Mammary epithelial cell (primary cell): ENCODE measurements at regions of chr1 and their contacts with region 1.

Region 1: DNA sequence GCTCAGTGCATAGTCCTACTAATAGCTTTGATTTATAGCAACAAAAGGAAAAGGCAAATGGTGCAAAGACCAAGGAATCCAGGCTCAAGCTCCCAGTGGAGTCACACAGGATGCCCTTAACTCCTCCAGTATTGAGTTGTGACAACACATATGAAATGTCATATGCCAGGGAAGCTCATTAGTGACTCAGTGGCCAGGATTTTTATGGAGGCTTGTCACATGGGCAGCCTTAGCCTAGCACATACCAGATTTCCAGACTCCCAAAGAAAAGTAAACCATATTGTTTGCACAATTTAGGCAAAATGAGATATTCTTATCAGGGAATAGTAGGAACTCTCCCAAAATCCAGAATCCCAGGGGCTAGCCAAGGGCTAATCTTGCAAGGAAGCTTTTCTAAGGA is 129.2 kb downstream of the MAGI3 start:
- DNase-seq: peak; percentile 30
- H3K4me3 ChIP-seq: no peak overlapping the region
- H3K27ac ChIP-seq: no peak overlapping the region
- H3K4me1 ChIP-seq: peaks cover 8% of the 10 kb centered on the region
- H3K27me3 ChIP-seq: no peaks in the 10 kb centered on the region
- CTCF ChIP-seq: no peak

Region 2: DNA sequence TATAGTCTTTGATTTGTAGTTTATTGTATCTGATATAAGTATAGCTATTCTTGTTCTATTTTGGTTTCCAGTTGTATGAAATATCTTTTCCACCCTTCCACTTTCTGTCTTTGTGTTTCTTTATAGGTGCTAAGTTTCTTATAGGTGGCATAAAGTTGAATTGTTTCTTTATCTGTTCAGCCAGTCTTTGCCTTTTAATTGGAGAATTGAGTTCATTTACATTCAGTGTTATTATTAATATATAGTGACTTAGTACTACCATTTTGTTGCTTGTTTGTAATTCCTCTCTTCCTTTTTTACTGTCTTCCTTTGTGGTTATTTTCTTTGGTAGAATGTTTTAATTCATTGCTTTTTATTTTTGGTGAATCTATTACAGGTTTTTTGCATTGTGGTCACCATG is 51.6 kb before region 1 on chr1:
- CTCF ChIA-PET with region 1: no interaction called
- dilution Hi-C with region 1: no loop called
- in situ Hi-C with region 1: no loop called
- intact Hi-C with region 1: no loop called
- DNase-seq: no peak
- H3K4me3 ChIP-seq: no peak overlapping the region
- H3K27ac ChIP-seq: no peak overlapping the region
- H3K4me1 ChIP-seq: no peaks in the 10 kb centered on the region
- H3K27me3 ChIP-seq: no peaks in the 10 kb centered on the region
- CTCF ChIP-seq: no peak

Region 3: GRCh38 chr1:113542221-113542701 is 22.7 kb after region 1 on chr1:
- CTCF ChIA-PET with region 1: interaction called, 22 read pairs
- dilution Hi-C with region 1: no loop called
- in situ Hi-C with region 1: no loop called
- intact Hi-C with region 1: no loop called
- DNase-seq: peak; percentile 88
- H3K4me3 ChIP-seq: no peak overlapping the region
- H3K27ac ChIP-seq: peak overlapping the region; percentile 77
- H3K4me1 ChIP-seq: peaks cover 23% of the 10 kb centered on the region
- H3K27me3 ChIP-seq: no peaks in the 10 kb centered on the region
- CTCF ChIP-seq: no peak

Region 4: DNA sequence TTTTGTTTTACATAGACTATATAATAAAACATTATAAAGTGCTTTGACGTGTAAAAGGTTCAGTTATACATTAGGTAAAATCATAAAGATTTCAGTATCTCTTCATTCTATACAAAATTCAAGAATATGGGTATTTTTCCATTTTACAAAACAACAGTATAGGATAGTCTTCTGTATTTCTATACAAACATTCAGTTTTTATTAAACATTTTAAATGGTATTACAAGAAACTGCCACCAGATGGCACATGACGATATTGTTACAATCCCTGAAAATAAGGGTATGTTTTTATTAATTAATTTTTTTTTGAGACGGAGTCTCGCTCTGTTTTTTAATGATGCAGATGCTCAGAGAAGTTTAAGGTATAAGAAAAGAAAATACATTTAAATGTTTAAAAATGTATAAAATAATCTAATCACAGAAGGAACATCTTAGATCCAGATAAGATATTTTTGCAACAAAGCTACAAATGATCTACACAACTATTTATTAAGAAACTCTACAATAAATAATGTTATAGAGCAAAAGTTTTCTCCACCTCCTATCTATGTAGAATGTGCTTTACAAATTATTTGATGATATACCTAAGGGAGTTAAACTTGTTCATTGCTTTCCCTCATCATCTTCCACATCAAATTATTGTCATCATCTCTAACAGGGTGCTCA is 316.2 kb after region 1 on chr1:
- CTCF ChIA-PET with region 1: no interaction called
- dilution Hi-C with region 1: no loop called
- in situ Hi-C with region 1: no loop called
- intact Hi-C with region 1: no loop called
- DNase-seq: peak; percentile 35
- H3K4me3 ChIP-seq: no peak overlapping the region
- H3K27ac ChIP-seq: no peak overlapping the region
- H3K4me1 ChIP-seq: peaks cover 6% of the 10 kb centered on the region
- H3K27me3 ChIP-seq: no peaks in the 10 kb centered on the region
- CTCF ChIP-seq: peak; percentile 21 to 51

Region 5: DNA sequence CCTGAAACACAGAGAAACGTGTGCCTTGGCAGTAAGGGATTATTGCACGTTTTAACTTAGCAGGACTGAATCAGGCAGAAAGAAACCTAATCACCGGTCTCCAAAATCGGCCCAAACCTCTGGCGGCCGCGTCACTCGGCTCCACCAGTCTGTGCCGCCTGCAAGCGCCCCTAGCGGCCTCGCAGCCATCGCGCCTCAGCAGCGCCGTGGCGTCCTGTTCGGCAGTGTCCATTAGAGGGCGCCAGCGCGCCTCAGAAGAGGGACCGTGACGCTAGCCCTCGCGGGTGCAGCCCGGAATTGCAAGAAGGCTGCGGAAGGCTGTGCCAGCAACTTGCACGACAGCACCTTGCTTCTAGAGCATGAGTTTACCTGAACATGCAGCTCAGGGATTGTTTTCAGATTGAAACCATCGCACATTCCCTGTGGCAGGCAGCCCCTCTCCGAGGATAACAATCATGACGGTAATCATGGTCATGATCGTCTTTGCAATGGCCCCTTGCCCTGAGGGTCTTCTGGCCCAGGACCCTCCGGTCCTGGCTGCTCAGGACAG is 827.0 kb after region 1 on chr1:
- CTCF ChIA-PET with region 1: no interaction called
- dilution Hi-C with region 1: no loop called
- in situ Hi-C with region 1: no loop called
- intact Hi-C with region 1: no loop called
- DNase-seq: peak; percentile 92
- H3K4me3 ChIP-seq: peak overlapping the region; percentile 48 to 51 (median 49)
- H3K27ac ChIP-seq: peak overlapping the region; percentile 33
- H3K4me1 ChIP-seq: peaks cover 6% of the 10 kb centered on the region
- H3K27me3 ChIP-seq: no peaks in the 10 kb centered on the region
- CTCF ChIP-seq: peak; percentile 100